Naive thymus-derived CD4-positive, alpha-beta T cell (primary cell): ENCODE measurements at regions of chr17 and their contacts with region 1.

Region 1: GRCh38 chr17:47663912-47664625 is 14.3 kb downstream of the KPNB1 start:
- DNase-seq: peak; percentile 19 to 65 (median 56)
- ATAC-seq: peak; percentile 81
- H3K4me3 ChIP-seq: no peak overlapping the region
- H3K4me3 Mint-ChIP-seq: peak overlapping the region in 3 of 10 donors; percentile 1 to 38 (median 25)
- H3K27ac ChIP-seq: peak overlapping the region; percentile 5
- H3K27ac Mint-ChIP-seq: peak overlapping the region; percentile 25 to 92 (median 66)
- H3K4me1 ChIP-seq: peaks cover 8 to 15% of the 10 kb centered on the region in 2 donors
- H3K4me1 Mint-ChIP-seq: peaks cover 8 to 48% (median 22%) of the 10 kb centered on the region in 7 donors
- H3K27me3 ChIP-seq: no peaks in the 10 kb centered on the region
- H3K27me3 Mint-ChIP-seq: no peaks in the 10 kb centered on the region

Region 2: GRCh38 chr17:47675380-47676198 is 11.5 kb after region 1 on chr17:
- CTCF ChIA-PET with region 1: interaction called, 11 read pairs
- POLR2A ChIA-PET with region 1: interaction called, 6 read pairs
- intact Hi-C with region 1: loop called in 1 of 2 experiments (anchors 1 kb)
- DNase-seq: peak in 1 of 9 donors; percentile 9
- ATAC-seq: no peak
- H3K4me3 ChIP-seq: no peak overlapping the region
- H3K4me3 Mint-ChIP-seq: no peak overlapping the region
- H3K27ac ChIP-seq: no peak overlapping the region
- H3K27ac Mint-ChIP-seq: peak overlapping the region in 3 of 9 donors; percentile 20 to 54 (median 38)
- H3K4me1 ChIP-seq: no peaks in the 10 kb centered on the region
- H3K4me1 Mint-ChIP-seq: peaks cover 0 to 40% (median 9%) of the 10 kb centered on the region in 7 donors
- H3K27me3 ChIP-seq: no peaks in the 10 kb centered on the region
- H3K27me3 Mint-ChIP-seq: no peaks in the 10 kb centered on the region

Region 3: GRCh38 chr17:47742319-47743181 is 78.5 kb after region 1 on chr17:
- CTCF ChIA-PET with region 1: interaction called, 9 read pairs
- POLR2A ChIA-PET with region 1: no interaction called
- intact Hi-C with region 1: loop called in 1 of 2 experiments (anchors 1 kb)
- DNase-seq: peak; percentile 19 to 56 (median 40)
- ATAC-seq: peak; percentile 59
- H3K4me3 ChIP-seq: no peak overlapping the region
- H3K4me3 Mint-ChIP-seq: peak overlapping the region in 2 of 10 donors; percentile 25 to 43
- H3K27ac ChIP-seq: no peak overlapping the region
- H3K27ac Mint-ChIP-seq: no peak overlapping the region
- H3K4me1 ChIP-seq: peaks cover 0 to 41% of the 10 kb centered on the region in 2 donors
- H3K4me1 Mint-ChIP-seq: peaks cover 0 to 37% (median 12%) of the 10 kb centered on the region in 7 donors
- H3K27me3 ChIP-seq: no peaks in the 10 kb centered on the region
- H3K27me3 Mint-ChIP-seq: no peaks in the 10 kb centered on the region

Region 4: DNA sequence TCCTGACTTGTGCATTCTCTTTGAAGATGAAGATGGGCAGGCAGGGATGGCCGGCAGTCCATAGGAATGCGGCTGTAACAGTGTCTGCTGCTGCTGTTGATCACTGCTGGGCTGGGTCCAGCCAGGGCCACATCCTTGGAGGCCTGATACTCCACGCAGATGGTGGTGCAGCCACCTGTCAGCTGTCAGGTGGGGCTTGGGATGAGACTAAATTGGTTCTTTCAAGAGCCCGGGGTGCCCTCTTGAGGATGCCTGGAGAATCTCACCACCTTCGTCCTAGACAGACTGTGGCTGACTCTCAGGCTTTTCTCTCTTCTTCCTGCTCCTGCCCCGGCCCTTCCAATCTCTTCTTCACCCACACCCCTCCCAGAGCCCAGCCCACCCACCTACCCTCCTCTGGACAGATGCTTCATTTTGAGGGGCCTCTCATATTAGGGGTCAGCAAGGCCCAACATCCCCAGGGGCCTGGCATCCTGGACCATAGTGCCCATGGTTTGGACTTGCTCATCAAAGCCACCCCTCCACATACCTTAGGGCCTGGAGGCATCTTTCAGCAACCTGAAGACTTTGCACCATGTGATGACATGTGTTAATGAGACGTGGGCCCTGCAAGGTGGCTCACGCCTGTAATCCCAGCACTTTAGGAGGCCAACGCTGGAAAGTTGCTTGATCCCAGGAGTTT is 138.4 kb after region 1 on chr17:
- CTCF ChIA-PET with region 1: interaction called, 6 read pairs
- POLR2A ChIA-PET with region 1: no interaction called
- intact Hi-C with region 1: loop called (anchors 1 kb)
- DNase-seq: peak in 8 of 9 donors; percentile 24 to 61 (median 50)
- ATAC-seq: peak; percentile 89
- H3K4me3 ChIP-seq: no peak overlapping the region
- H3K4me3 Mint-ChIP-seq: no peak overlapping the region
- H3K27ac ChIP-seq: no peak overlapping the region
- H3K27ac Mint-ChIP-seq: no peak overlapping the region
- H3K4me1 ChIP-seq: no peaks in the 10 kb centered on the region
- H3K4me1 Mint-ChIP-seq: peaks cover 0 to 4% (median 0%) of the 10 kb centered on the region in 7 donors
- H3K27me3 ChIP-seq: no peaks in the 10 kb centered on the region
- H3K27me3 Mint-ChIP-seq: peaks cover 0 to 9% (median 4%) of the 10 kb centered on the region in 5 donors